ENCODE measurements at regions of chr4 and their contacts with region 1.

Region 1: DNA sequence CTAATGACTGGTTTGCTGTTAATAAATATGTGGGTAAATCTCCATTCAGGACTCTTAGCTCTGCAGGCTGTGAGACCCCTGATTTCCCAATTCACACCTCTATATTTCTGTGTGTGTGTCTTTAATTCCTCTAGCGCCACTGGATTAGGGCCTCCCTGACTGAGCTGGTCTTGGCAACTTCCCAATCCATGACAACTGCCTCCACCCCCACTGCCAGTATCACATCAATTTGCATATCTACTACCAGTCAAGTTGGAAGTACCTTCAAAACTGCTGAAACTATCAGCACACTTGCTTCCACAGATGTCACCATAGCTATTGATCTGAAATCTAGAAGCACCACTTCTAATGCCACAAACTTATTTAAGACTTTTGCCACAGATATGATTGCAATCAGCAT is 27.6 kb downstream of the OPRPN start:
- DNase-seq: no peak
- ATAC-seq: no peak
- H3K4me3 ChIP-seq: no peak overlapping the region
- H3K27ac ChIP-seq: no peak overlapping the region
- H3K4me1 ChIP-seq: no peaks in the 10 kb centered on the region
- H3K27me3 ChIP-seq: no peaks in the 10 kb centered on the region
- CTCF ChIP-seq: no peak

Region 2: GRCh38 chr4:70473679-70474078 is 48.4 kb after region 1 on chr4:
- intact Hi-C with region 1: loop called in 1 of 10 experiments (anchors 2 kb)
- DNase-seq: no peak
- ATAC-seq: no peak
- H3K4me3 ChIP-seq: no peak overlapping the region
- H3K27ac ChIP-seq: no peak overlapping the region
- H3K4me1 ChIP-seq: no peaks in the 10 kb centered on the region
- H3K27me3 ChIP-seq: no peaks in the 10 kb centered on the region
- CTCF ChIP-seq: no peak

Measured in heart right ventricle (tissue), 16 donors.